ENCODE measurements at regions of chr4 and their contacts with region 1.

Region 1: GRCh38 chr4:40369437-40370274 is 34.5 kb downstream of the CHRNA9 start:
- DNase-seq: no peak
- H3K4me3 ChIP-seq: no peak overlapping the region
- H3K27ac ChIP-seq: no peak overlapping the region
- H3K4me1 ChIP-seq: no peaks in the 10 kb centered on the region
- H3K27me3 ChIP-seq: no peaks in the 10 kb centered on the region
- CTCF ChIP-seq: no peak
- POLR2A ChIP-seq: no peak

Region 2: DNA sequence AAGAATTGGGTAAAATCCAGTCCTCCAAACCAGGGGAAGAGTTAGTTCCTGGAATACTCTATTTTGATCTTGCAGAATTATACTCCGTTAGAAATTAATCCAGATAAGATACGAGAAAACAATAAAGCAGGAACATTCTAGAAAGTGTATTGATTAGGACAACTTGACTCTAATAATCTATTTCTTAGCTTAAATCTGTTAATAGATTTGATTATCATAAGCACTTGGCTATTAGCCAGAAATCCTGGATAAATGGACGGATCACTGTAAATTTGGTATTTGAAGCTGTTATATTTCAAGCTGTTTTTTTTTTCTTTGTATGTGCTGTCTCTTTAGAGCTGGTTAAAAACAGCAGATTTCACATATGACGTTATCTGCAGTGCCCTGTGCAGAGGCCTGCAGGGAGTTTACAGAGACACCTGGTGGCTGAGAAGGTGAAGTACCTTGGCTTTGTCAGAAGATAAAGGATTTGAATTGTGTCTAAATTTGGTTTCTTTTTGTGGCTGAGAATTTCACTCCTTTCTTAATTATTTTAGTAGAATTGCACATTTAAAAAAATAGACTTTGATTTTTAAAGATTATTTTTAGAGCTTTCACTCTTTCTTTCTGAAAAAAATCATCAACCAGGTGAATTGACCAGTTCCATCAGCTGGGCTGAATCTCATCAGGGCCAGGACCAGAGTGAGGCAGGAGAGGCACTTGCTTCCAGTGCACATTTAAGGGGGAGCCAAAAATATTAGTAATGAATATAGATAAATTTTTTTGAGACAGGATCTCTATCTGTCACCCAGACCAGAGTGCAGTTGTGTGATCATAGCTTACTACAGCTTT is 44.3 kb before region 1 on chr4:
- intact Hi-C with region 1: loop called (anchors 2 kb)
- DNase-seq: peak in 1 of 2 donors; percentile 36
- H3K4me3 ChIP-seq: no peak overlapping the region
- H3K27ac ChIP-seq: no peak overlapping the region
- H3K4me1 ChIP-seq: no peaks in the 10 kb centered on the region
- H3K27me3 ChIP-seq: no peaks in the 10 kb centered on the region
- CTCF ChIP-seq: peak; percentile 60 to 82 (median 72)
- POLR2A ChIP-seq: no peak

Region 3: GRCh38 chr4:40875507-40876150 is 506.0 kb after region 1 on chr4:
- intact Hi-C with region 1: no loop called
- DNase-seq: no peak
- H3K4me3 ChIP-seq: no peak overlapping the region
- H3K27ac ChIP-seq: no peak overlapping the region
- H3K4me1 ChIP-seq: no peaks in the 10 kb centered on the region
- H3K27me3 ChIP-seq: no peaks in the 10 kb centered on the region
- CTCF ChIP-seq: no peak
- POLR2A ChIP-seq: no peak

Measured in breast epithelium (tissue), 4 donors.